ENCODE measurements at regions of chr6 and their contacts with region 1.

Region 1: DNA sequence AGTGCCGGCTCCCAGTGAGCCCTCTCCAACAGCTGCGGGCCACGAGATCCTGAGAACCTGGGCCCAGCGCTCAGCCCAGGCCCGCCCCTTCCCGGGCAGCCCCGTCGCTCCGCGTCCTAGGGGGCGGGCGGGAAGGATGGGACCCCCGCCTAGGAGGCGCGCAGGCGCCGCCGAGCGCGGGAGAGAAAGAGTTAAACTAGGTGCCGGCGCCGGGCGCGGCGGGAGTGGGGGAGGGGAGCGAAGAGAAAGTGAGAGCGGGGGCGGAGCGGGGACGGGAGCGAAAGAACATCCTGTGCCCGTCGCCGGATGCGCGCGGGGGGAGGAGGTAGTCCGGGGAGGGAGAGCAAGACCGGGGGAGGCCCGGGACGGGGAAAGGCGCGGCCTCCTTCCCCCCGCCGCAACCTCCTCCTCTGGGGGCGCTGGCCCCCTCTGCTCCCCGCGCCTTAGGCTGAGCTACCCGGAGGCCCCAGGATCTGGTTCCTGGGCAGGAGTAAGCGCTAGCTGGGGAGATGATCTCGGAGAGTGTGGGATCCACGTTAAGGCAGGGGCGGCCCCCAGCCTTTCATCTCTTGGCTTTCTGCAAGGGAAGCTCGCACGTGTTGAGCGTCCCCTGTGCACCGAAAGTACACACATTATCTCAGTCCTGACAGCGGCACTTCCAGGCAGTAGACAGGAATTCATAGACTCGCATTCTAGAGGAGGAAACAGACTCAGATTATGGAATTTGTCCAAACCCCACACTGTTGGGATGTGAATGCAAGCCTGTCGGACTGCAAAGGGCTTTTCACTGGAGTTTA is 4.9 kb upstream of the ARMC12 start:
- DNase-seq: peak; percentile 29
- H3K4me3 ChIP-seq: peak overlapping the region; percentile 65
- CTCF ChIP-seq: no peak

Region 2: DNA sequence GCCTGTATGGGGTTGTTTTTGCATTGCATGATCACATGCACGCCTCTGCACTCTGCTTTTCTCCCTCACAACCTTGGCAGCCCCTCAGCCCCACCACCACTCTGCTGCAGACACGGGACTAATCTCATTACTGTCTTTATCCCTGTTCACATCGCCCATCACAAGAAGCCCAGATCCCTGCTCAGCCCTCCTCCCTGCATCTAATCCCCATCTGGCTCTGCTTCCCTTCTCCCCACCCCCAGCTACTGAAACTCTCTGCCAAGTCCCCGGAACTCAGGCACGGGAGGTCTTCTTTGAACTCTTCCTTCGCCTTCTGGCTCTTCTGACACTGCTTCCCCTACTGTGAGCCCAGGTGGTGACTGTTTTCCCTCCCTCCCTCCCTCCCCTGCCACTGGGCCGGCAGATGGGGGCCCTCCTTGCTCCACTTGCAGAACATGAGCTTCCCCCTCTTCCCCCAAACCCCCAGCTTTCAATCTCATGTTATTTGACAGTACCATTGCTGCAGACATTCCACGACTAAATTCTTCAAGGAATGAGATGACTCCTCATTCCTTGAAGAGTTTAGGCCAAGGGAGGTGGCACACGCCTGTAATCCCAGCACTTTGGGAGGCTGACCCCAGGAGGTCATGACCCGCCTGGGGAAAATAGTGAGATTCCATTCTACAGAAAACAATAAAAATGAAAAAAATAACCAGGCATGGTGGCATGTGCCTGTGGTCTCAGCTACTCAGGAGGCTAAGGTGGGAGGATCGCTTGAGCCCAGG is 197.3 kb before region 1 on chr6:
- CTCF ChIA-PET with region 1: interaction called, 28 read pairs
- POLR2A ChIA-PET with region 1: no interaction called
- DNase-seq: no peak
- H3K4me3 ChIP-seq: no peak overlapping the region
- CTCF ChIP-seq: no peak

Region 3: GRCh38 chr6:35583893-35584688 is 147.8 kb before region 1 on chr6:
- CTCF ChIA-PET with region 1: interaction called, 524 read pairs
- POLR2A ChIA-PET with region 1: interaction called, 4 read pairs
- DNase-seq: no peak
- H3K4me3 ChIP-seq: no peak overlapping the region
- CTCF ChIP-seq: peak; percentile 65

Region 4: GRCh38 chr6:35635601-35636597 is 96.0 kb before region 1 on chr6:
- CTCF ChIA-PET with region 1: interaction called, 10 read pairs
- POLR2A ChIA-PET with region 1: no interaction called
- DNase-seq: no peak
- H3K4me3 ChIP-seq: no peak overlapping the region
- CTCF ChIP-seq: no peak

Region 5: DNA sequence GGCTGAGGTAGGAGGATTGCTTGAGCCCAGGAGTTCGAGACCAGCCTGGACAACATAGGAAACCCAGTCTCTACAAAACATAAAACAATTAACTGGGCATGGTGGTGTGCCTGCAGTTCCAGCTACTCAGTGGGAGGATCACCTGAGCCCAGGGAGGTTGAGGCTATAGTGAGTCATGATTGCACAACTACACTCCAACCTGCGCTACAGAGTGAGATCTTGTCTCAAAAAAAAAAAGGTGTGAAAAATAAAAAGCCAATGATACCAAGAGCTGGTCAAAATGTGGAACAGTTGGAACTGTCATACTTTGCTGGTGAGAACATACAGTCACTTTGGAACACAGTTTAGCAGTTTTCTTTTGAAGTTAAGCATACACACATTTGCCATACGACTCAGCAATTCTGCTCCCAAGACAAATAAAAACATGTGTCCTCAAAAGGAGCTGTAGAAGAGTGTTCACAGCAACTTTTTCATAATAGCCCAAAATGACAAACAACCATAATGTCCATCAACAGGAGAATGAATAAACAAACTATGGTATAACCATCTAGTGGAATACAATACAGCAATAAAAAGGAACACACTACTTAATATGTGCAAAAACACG is 21.6 kb before region 1 on chr6:
- CTCF ChIA-PET with region 1: interaction called, 11 read pairs
- POLR2A ChIA-PET with region 1: no interaction called
- DNase-seq: no peak
- H3K4me3 ChIP-seq: no peak overlapping the region
- CTCF ChIP-seq: no peak

Region 6: DNA sequence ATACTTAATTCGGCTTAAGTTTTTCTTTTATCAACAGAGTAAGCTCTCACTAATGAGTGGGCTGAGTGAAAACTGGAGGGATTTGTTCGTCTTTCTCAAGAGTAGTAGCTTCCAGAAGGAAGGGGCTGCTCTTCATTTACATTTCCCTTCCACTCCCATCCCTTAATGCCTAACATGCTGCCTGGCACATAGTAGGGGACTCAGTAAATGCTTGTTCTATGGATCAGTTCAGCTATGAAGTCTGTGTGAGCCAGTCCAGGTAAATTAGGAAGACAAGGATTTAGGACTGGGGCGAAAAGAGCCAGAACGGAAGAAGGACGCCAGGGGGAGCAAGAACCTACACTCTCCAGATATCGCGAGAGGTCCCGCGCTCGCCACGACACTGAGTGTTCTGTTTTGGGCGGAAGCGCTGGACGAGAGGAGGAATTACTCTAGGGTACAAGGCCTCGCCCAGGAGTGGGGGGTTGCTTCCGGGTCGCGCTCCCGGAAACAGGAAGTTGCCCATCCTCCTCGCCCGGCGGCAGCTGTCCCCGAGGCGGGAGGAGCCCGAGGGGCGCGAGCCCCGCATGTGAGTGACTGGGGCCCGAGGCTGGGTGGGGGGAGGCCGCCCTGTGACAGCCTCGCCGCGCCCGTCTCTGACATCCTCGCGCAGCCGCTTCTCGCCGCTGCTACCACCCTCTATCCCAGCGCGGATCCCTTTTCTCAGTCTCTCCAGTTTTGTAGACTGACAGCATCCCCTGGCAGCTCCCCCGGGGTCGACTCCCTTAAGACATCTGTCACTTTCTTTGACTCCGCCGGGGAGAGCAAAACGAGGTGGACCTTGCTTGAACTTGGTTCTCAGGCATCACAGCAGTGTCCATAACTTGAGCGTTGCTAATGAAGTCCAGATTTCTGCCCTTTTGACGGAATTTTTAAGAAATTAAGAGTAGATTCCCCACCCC is 1153.8 kb after region 1 on chr6 and contains the start of gene C6orf89:
- CTCF ChIA-PET with region 1: no interaction called
- POLR2A ChIA-PET with region 1: no interaction called
- DNase-seq: peak; percentile 77
- H3K4me3 ChIP-seq: peak within 1 kb of the TSS; percentile 86
- CTCF ChIP-seq: peak; percentile 81